ENCODE measurements at regions of chr20 and their contacts with region 1.

Region 1: DNA sequence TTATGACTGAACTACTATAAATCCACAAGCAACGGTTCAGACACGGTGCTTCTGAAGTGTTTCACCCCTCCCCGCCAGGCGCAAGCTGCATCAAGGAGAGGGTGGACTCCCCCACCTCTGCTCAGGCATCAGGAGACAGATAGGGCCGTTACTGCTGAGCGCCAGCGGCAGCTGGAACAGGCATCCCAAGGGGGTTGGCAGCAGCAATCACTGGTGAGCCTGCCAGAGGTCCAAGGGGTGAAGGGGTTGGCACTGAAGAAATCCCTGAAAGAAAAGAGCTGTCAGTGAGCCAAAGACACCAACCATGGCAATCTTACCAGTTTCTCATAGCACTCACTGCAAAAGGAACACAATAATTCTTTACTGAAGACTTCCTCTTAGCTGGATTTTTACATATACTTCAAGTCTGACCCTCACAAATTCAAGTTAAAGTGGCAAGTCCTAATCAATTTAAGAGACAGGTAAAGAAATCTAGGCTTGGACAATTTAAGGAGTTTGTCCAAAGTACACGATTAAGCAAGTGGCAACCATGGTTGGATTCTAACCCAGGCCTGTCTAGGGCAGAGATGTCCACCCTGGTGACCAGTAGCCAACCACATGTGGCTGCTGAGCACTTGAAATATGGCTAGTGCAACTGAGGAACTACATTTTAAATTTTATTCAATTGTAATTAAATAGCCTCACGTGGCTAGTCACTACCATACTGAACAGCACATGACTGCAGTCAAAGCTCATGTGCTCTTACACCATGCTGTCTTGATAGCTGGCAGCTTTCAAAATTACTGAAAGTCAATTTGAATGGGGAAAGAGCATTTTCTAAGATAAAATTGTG is 21.7 kb upstream of the TBC1D20 start:
- DNase-seq: no peak
- ATAC-seq: no peak
- H3K4me3 ChIP-seq: no peak overlapping the region
- H3K27ac ChIP-seq: no peak overlapping the region
- H3K4me1 ChIP-seq: no peaks in the 10 kb centered on the region
- H3K27me3 ChIP-seq: no peaks in the 10 kb centered on the region
- CTCF ChIP-seq: no peak
- POLR2A ChIP-seq: no peak
- RAD21 ChIP-seq: no peak

Region 2: GRCh38 chr20:496126-496696 is 12.2 kb after region 1 on chr20:
- CTCF ChIA-PET with region 1: no interaction called
- POLR2A ChIA-PET with region 1: no interaction called
- dilution Hi-C with region 1: no loop called
- in situ Hi-C with region 1: no loop called
- intact Hi-C with region 1: loop called (anchors 1 kb)
- DNase-seq: peak; percentile 49
- ATAC-seq: peak; percentile 61
- H3K4me3 ChIP-seq: no peak overlapping the region
- H3K27ac ChIP-seq: no peak overlapping the region; the same call in 1 of the 2 replicates
- H3K4me1 ChIP-seq: no peaks in the 10 kb centered on the region
- H3K27me3 ChIP-seq: no peaks in the 10 kb centered on the region
- CTCF ChIP-seq: no peak
- POLR2A ChIP-seq: no peak
- RAD21 ChIP-seq: no peak

Region 3: GRCh38 chr20:634556-634955 is 150.5 kb after region 1 on chr20:
- CTCF ChIA-PET with region 1: no interaction called
- POLR2A ChIA-PET with region 1: no interaction called
- dilution Hi-C with region 1: no loop called
- in situ Hi-C with region 1: no loop called
- intact Hi-C with region 1: no loop called
- DNase-seq: no peak
- ATAC-seq: no peak
- H3K4me3 ChIP-seq: no peak overlapping the region
- H3K27ac ChIP-seq: no peak overlapping the region
- H3K4me1 ChIP-seq: no peaks in the 10 kb centered on the region
- H3K27me3 ChIP-seq: peaks cover 41% of the 10 kb centered on the region
- CTCF ChIP-seq: no peak
- POLR2A ChIP-seq: no peak
- RAD21 ChIP-seq: no peak

Measured in IMR-90 (cell line).